SK-MEL-5 (cell line): ENCODE measurements at regions of chr13 and their contacts with region 1.

Region 1: GRCh38 chr13:94454906-94455305 is 24.6 kb downstream of the DCT start:
- DNase-seq: no peak

Region 2: GRCh38 chr13:94327318-94327717 is 127.6 kb before region 1 on chr13:
- in situ Hi-C with region 1: no loop called
- DNase-seq: no peak

Region 3: GRCh38 chr13:94595950-94596574 is 141.2 kb after region 1 on chr13 and contains the start of gene TGDS:
- in situ Hi-C with region 1: loop called (anchors 25 kb)
- DNase-seq: peak; percentile 94
- total RNA-seq, gene TGDS: 57.0 and 59.9 TPM in 2 replicates

Region 4: GRCh38 chr13:94712812-94713560 is 258.1 kb after region 1 on chr13:
- in situ Hi-C with region 1: no loop called
- DNase-seq: no peak